ENCODE measurements at regions of chr20 and their contacts with region 1.

Region 1: GRCh38 chr20:36886859-36887751 is 11.2 kb downstream of the TLDC2 start:
- DNase-seq: peak; percentile 77
- H3K4me3 ChIP-seq: no peak overlapping the region
- H3K27ac ChIP-seq: no peak overlapping the region
- H3K4me1 ChIP-seq: no peaks in the 10 kb centered on the region
- H3K27me3 ChIP-seq: no peaks in the 10 kb centered on the region
- CTCF ChIP-seq: peak; percentile 95 to 97
- POLR2A ChIP-seq: no peak

Region 2: DNA sequence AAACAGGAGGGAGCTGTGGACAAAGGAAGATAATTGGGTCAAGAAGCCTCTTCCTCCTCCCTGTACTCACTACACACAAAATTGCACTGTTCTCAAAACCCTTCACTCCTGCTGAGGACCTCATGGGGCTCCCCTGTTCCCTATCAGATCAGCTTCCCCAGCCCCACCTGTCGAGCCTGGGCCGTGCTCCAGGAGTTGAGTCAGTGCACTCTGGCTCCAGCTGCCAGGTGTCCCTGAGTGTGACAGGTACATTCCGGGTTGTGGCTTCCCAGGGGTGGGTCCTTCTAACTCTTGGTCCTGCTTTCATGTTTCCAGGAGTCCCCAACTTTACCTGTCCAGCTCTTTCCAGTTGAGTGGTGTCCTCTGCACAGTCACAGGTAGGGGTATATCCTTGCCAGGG is 273.1 kb before region 1 on chr20:
- CTCF ChIA-PET with region 1: interaction called, 30 read pairs
- POLR2A ChIA-PET with region 1: no interaction called
- dilution Hi-C with region 1: no loop called
- intact Hi-C with region 1: loop called (anchors 1 kb)
- DNase-seq: no peak
- H3K4me3 ChIP-seq: no peak overlapping the region
- H3K27ac ChIP-seq: no peak overlapping the region
- H3K4me1 ChIP-seq: no peaks in the 10 kb centered on the region
- H3K27me3 ChIP-seq: no peaks in the 10 kb centered on the region
- CTCF ChIP-seq: no peak
- POLR2A ChIP-seq: no peak

Region 3: DNA sequence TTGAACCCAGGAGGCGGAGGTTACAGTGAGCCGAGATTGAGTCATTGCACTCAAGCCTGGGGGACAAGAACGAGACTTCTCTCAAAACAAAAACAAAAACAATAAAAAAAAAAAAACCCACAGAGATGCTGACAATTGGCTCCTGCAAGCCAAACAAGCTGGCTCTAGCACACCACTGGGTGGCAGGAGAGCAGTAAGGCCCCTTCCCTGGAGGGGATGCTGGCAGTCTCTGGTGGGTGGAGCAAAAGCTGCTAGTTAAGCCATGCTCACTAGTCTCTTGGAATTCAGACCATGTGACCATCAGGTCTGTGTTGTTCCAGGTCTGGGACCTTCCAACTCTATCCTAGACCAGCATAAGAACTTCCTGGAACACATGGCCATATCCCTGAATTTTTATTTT is 94.7 kb before region 1 on chr20:
- CTCF ChIA-PET with region 1: interaction called, 23 read pairs
- POLR2A ChIA-PET with region 1: no interaction called
- dilution Hi-C with region 1: no loop called
- intact Hi-C with region 1: no loop called
- DNase-seq: peak; percentile 68
- H3K4me3 ChIP-seq: no peak overlapping the region
- H3K27ac ChIP-seq: no peak overlapping the region
- H3K4me1 ChIP-seq: no peaks in the 10 kb centered on the region
- H3K27me3 ChIP-seq: no peaks in the 10 kb centered on the region
- CTCF ChIP-seq: peak; percentile 42 to 69
- POLR2A ChIP-seq: no peak

Region 4: GRCh38 chr20:36969478-36970186 is 82.5 kb after region 1 on chr20:
- CTCF ChIA-PET with region 1: no interaction called
- POLR2A ChIA-PET with region 1: no interaction called
- dilution Hi-C with region 1: no loop called
- intact Hi-C with region 1: no loop called
- DNase-seq: no peak
- H3K4me3 ChIP-seq: no peak overlapping the region
- H3K27ac ChIP-seq: no peak overlapping the region
- H3K4me1 ChIP-seq: no peaks in the 10 kb centered on the region
- H3K27me3 ChIP-seq: no peaks in the 10 kb centered on the region
- CTCF ChIP-seq: no peak
- POLR2A ChIP-seq: no peak

Measured in endothelial cell of umbilical vein (primary cell).